ENCODE measurements at regions of chr7 and their contacts with region 1.

Region 1: DNA sequence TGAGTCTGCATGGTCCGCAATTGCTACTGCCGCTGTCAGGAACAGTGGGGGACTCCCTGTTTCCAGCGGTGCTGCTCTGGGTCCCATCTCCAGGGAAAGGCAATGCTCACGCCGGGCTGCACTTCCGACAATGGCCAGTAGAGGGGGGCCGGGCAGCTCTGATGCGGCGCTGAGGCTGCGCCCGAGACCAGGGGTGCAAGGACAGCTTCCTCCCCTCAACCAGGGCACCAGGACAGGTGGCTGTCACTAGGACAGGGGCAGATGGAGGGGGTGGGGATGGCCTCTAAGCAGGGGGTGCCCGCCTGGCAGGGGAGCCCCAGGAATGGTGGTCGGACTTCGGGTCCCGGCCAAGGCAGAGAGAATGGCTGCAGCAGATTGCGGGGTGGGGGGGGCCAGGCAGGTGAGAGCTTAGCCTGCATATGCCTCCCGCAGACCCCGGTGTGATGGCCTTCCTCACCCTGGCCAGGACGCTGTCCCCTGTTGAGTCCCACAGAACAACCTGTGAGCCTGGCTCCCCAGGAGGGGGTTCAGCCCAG is 71.0 kb upstream of the KCTD7 start:
- DNase-seq: peak; percentile 55 to 83 (median 71)
- ATAC-seq: peak; percentile 90
- H3K4me3 ChIP-seq: no peak overlapping the region
- H3K4me3 Mint-ChIP-seq: no peak overlapping the region
- H3K27ac ChIP-seq: no peak overlapping the region
- H3K27ac Mint-ChIP-seq: no peak overlapping the region
- H3K4me1 ChIP-seq: peaks cover 10% of the 10 kb centered on the region
- H3K4me1 Mint-ChIP-seq: peaks cover 4% of the 10 kb centered on the region
- H3K27me3 ChIP-seq: no peaks in the 10 kb centered on the region
- H3K27me3 Mint-ChIP-seq: no peaks in the 10 kb centered on the region
- CTCF ChIP-seq: peak; percentile 89

Region 2: GRCh38 chr7:66642186-66642585 is 84.5 kb after region 1 on chr7:
- CTCF ChIA-PET with region 1: interaction called, 4 read pairs
- POLR2A ChIA-PET with region 1: no interaction called
- intact Hi-C with region 1: loop called in 1 of 2 experiments (anchors 5 kb)
- DNase-seq: no peak
- ATAC-seq: no peak
- H3K4me3 ChIP-seq: no peak overlapping the region
- H3K4me3 Mint-ChIP-seq: no peak overlapping the region
- H3K27ac ChIP-seq: no peak overlapping the region
- H3K27ac Mint-ChIP-seq: no peak overlapping the region
- H3K4me1 ChIP-seq: no peaks in the 10 kb centered on the region
- H3K4me1 Mint-ChIP-seq: peaks cover 21% of the 10 kb centered on the region
- H3K27me3 ChIP-seq: no peaks in the 10 kb centered on the region
- H3K27me3 Mint-ChIP-seq: no peaks in the 10 kb centered on the region
- CTCF ChIP-seq: no peak

Region 3: GRCh38 chr7:66769833-66770512 is 212.3 kb after region 1 on chr7:
- CTCF ChIA-PET with region 1: no interaction called
- POLR2A ChIA-PET with region 1: no interaction called
- intact Hi-C with region 1: loop called in 1 of 2 experiments (anchors 5 kb)
- DNase-seq: no peak
- ATAC-seq: no peak
- H3K4me3 ChIP-seq: no peak overlapping the region
- H3K4me3 Mint-ChIP-seq: no peak overlapping the region
- H3K27ac ChIP-seq: no peak overlapping the region
- H3K27ac Mint-ChIP-seq: peak overlapping the region; percentile 34
- H3K4me1 ChIP-seq: peaks cover 12% of the 10 kb centered on the region
- H3K4me1 Mint-ChIP-seq: peaks cover 57% of the 10 kb centered on the region
- H3K27me3 ChIP-seq: no peaks in the 10 kb centered on the region
- H3K27me3 Mint-ChIP-seq: no peaks in the 10 kb centered on the region
- CTCF ChIP-seq: no peak

Region 4: DNA sequence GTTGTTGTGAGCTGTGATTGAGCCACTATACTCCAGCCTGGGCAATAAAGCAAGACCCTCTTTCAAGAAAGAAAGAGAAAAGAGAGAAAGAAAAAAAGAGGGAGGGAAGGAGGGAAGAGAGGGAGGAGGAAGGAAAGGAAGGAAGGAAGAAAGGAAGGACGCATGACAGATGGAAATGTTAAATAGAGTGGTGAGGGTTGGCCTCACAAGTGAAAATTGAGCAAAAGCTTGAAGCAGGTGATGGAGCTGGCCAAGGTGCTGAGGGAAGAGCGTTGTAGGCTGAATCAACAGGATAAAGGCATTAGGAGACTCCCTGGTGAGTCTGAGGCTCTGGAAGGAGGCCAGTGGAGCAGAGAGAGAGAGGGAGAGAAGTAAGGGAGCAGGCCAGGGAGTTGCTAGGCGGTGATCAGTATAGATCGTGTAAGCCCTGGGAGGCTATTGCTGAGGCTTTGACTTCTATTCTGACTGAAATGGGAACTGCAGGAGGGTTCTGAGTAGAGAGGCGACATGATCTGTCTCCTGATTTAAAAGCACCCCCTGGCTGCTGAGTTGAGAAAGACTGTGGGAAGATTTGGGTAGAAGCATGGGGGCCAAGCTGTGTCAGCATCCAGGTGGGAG is 336.9 kb after region 1 on chr7:
- CTCF ChIA-PET with region 1: interaction called, 3 read pairs
- POLR2A ChIA-PET with region 1: no interaction called
- intact Hi-C with region 1: loop called in 1 of 2 experiments (anchors 5 kb)
- DNase-seq: peak in 2 of 14 experiments; percentile 11 to 23
- ATAC-seq: no peak
- H3K4me3 ChIP-seq: no peak overlapping the region
- H3K4me3 Mint-ChIP-seq: no peak overlapping the region
- H3K27ac ChIP-seq: no peak overlapping the region
- H3K27ac Mint-ChIP-seq: no peak overlapping the region
- H3K4me1 ChIP-seq: no peaks in the 10 kb centered on the region
- H3K4me1 Mint-ChIP-seq: no peaks in the 10 kb centered on the region
- H3K27me3 ChIP-seq: no peaks in the 10 kb centered on the region
- H3K27me3 Mint-ChIP-seq: no peaks in the 10 kb centered on the region
- CTCF ChIP-seq: no peak

Measured in CD4-positive, alpha-beta T cell (primary cell).